ENCODE measurements at regions of chr6 and their contacts with region 1.

Region 1: GRCh38 chr6:150891888-150892485 is 26.5 kb downstream of the MTHFD1L start:
- DNase-seq: peak; percentile 74 to 86
- H3K4me3 ChIP-seq: no peak overlapping the region
- H3K27ac ChIP-seq: no peak overlapping the region
- H3K4me1 ChIP-seq: peaks cover 0 to 21% (median 7%) of the 10 kb centered on the region in 4 donors
- H3K27me3 ChIP-seq: no peaks in the 10 kb centered on the region
- CTCF ChIP-seq: peak; percentile 77 to 87

Region 2: DNA sequence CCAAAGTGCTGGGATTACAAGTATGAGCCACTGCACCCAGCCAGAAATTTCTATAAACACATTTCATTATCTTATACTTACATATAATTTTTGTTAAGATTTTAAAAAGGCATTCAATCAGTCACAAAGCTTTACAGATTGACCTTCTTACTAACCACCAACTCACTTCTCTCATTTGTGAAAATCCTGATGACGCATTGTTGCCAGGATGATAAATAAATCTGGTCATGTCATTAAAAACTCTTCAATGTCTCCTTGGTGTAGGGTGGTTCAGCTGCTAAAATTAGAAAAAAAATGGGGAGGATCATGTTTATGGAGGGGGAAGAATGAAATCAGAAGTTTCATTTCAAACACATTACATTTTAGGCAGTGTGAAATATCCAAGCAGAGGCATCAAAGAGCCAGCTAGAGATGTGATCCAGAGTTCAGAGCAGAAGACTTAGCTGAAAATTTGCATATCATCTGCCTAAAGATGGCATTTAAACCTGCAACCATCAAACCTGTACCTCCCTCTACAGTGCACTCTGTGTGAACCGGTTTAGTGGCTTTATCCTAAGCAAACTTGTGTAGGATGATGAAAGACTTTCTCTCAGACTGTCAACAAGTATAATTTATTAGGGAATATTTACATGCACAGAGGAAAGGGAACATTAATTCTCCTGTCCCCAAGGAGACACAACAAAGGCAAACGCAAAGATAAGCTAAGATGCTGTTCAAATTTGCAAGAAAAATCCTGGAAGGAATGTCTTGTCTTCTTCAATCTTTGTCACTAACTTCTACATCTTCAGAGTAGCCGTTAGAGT is 377.2 kb before region 1 on chr6:
- intact Hi-C with region 1: no loop called
- DNase-seq: no peak
- H3K4me3 ChIP-seq: no peak overlapping the region
- H3K27ac ChIP-seq: no peak overlapping the region
- H3K4me1 ChIP-seq: no peaks in the 10 kb centered on the region
- H3K27me3 ChIP-seq: no peaks in the 10 kb centered on the region
- CTCF ChIP-seq: no peak

Region 3: GRCh38 chr6:150999107-150999506 is 107.1 kb after region 1 on chr6:
- intact Hi-C with region 1: loop called (anchors 10 kb)
- DNase-seq: no peak
- H3K4me3 ChIP-seq: no peak overlapping the region
- H3K27ac ChIP-seq: no peak overlapping the region
- H3K4me1 ChIP-seq: no peaks in the 10 kb centered on the region
- H3K27me3 ChIP-seq: no peaks in the 10 kb centered on the region
- CTCF ChIP-seq: no peak

Region 4: GRCh38 chr6:151021896-151022295 is 129.9 kb after region 1 on chr6:
- intact Hi-C with region 1: loop called (anchors 10 kb)
- DNase-seq: no peak
- H3K4me3 ChIP-seq: no peak overlapping the region
- H3K27ac ChIP-seq: peak overlapping the region in 1 of 2 donors; percentile 30
- H3K4me1 ChIP-seq: peaks cover 0 to 29% (median 5%) of the 10 kb centered on the region in 4 donors
- H3K27me3 ChIP-seq: no peaks in the 10 kb centered on the region
- CTCF ChIP-seq: no peak

Region 5: DNA sequence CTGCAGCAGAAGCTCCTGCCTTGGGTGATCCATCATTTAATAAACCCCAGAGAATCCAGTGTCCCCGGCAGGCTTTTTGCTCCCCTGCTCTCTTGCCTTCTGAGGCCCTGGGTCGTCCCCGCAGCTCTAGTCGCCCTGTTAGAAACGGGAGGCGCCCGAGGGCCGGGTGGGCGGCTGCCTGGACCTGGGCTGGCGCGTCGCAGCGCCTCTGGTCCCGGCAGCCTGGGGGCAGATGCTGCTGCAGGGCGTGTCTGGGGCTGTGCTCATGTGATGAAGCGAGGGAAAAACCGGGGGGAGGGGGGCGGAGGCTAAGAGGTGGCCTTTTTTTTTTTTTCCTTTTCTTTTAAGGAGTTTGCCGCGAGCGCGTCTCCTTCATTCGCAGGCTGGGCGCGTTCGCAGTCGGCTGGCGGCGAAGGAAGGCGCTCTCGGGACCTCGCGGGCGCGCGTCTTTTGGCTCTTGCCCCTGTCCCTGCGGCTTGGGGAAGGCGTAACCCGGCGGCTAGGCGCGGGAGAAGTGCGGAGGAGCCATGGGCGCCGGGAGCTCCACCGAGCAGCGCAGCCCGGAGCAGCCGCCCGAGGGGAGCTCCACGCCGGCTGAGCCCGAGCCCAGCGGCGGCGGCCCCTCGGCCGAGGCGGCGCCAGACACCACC is 348.2 kb after region 1 on chr6:
- intact Hi-C with region 1: loop called (anchors 5 kb)
- DNase-seq: peak; percentile 91 to 94
- H3K4me3 ChIP-seq: peak overlapping the region; percentile 95 to 97
- H3K27ac ChIP-seq: peak overlapping the region; percentile 98 to 99
- H3K4me1 ChIP-seq: peaks cover 0 to 31% (median 10%) of the 10 kb centered on the region in 4 donors
- H3K27me3 ChIP-seq: no peaks in the 10 kb centered on the region
- CTCF ChIP-seq: no peak

Region 6: DNA sequence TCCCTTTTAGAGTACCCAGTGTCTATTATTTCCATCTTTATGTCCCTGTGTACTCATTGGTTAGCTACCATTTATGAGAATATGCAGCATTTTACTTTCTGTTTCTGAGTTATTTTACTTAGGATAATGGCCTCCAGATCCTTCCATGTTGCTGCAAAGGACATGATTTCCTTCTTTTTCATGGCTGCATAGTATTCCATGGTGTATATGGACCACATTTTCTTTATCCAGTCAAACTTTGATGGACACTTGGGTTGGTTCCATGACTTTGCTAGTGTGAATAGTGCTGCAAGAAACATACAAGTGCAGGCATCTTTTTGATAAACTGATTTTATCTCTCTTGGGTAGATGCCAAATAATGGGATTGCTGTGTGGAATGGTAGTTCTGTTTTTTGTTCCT is 443.9 kb after region 1 on chr6:
- intact Hi-C with region 1: loop called (anchors 2 kb)
- DNase-seq: no peak
- H3K4me3 ChIP-seq: no peak overlapping the region
- H3K27ac ChIP-seq: no peak overlapping the region
- H3K4me1 ChIP-seq: peaks cover 0 to 3% (median 0%) of the 10 kb centered on the region in 4 donors
- H3K27me3 ChIP-seq: no peaks in the 10 kb centered on the region
- CTCF ChIP-seq: no peak

Measured in tibial artery (tissue), 4 donors.